Posterior cingulate gyrus (tissue), 11 donors: ENCODE measurements at regions of chr2 and their contacts with region 1.

Region 1: DNA sequence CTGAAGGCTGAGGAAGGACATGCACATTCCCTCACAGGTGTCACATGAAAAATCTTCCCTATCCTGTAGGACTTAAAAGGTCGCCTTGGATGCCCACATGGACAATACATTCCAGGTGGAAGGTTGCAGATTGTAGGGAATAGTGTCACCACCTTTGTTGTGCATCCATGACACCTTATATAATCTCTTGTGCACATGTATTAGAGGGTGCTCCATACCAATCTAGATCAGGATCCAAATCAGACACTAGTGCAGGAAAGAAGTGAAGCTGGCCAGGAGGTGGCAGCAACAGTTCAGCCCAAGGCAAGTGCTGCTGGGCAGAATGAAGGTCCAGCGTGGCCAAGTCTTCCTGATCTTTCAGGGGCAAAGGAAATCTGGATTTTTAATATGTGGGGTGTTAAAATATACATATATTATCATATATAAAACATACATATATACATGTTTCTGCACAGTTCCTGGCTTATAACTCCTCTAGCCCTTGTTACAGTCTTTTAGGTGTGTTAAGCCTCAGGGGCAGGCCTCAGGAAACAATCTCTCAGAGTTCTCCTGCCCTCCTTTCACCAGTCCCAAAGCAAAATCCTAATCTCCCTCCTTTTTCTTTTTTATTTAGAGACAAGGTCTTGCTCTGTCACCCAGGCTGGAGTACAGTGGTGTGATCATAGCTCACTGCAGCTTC is 16.6 kb downstream of the NIF3L1 start:
- DNase-seq: peak; percentile 50 to 95 (median 79)

Region 2: DNA sequence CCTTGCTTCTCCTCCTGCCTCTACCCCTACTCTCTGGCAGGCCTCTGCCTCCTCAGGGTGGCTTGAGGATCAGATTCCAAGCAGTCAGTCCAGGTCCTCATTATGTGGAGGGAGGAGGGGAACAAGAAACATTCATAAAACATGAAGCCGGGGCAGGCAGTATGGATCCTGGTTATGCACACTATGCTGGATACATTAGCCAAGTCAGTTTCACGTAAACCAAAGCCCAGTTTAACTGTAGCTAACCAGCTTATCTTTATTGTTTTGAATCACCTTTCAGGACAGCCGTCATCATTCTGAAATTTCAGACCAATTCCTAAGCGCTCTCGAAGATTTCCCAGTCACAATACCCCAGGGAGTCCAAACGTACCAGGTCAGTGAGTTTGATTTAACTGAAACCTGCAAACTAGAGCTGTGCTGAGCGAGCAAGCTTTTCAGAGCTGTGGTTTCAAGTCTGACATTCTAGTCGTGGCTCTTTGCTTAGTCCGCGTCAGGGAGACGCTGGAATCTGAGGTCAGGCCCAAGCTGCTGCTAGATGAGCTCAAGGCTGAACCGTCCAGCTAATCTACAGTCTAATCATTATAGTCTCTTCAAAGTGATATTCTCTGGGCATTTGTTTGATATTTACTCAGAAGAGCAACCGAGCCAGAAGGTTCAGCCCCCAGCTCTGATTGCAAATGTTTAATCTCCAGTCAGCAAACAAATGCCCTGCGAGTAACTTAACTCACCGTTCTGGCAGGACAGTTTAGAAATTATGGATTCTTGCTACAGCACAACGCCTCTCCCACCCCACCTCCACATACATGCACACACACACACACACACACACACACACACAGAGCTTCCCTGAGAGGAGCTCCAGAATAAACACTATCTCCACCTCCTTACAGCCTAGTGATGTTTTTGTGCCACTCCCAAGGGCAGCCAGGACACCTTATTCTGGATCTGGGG is 157.8 kb before region 1 on chr2:
- intact Hi-C with region 1: no loop called
- DNase-seq: no peak

Region 3: DNA sequence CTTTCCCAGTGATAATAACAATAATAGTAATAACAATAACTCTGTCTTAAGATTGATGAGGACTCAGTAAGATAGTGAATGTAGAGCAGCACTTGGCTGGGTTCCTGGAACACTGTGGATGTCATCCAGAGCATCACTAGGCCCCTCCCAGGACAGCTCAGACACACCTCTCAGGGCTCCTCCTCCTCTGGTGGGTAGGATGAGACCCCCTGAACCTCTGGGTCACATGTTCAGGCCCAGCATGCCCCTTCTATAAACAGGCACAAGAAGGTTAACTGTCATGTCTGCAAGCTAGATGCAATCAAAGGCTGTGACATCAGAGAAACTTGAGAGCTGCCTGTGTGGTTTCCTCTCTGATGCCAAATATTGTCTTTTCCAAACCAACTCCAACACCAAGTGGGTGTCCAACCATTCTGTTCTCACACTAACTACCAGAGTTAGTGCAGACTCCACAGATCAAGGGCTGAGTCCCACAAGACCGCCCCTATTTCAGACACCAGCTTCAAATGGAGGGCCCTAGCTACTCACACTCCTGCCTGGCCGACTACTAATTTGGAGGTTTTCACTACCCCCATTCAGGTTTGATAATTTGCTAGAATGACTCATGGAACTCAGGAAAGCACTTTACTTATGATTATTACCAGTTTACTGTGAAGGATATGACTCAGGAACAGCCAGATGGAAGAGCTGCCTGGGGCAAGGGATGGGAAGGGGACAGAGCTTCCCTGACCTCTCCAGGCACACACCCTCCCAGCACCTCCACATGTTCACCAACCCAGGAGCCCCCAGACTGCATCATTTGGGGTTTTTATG is 140.4 kb before region 1 on chr2:
- intact Hi-C with region 1: no loop called
- DNase-seq: no peak

Region 4: GRCh38 chr2:200811336-200812121 is 94.2 kb before region 1 on chr2 and contains the start of gene BZW1:
- intact Hi-C with region 1: no loop called
- DNase-seq: peak; percentile 94 to 99 (median 96)

Region 5: DNA sequence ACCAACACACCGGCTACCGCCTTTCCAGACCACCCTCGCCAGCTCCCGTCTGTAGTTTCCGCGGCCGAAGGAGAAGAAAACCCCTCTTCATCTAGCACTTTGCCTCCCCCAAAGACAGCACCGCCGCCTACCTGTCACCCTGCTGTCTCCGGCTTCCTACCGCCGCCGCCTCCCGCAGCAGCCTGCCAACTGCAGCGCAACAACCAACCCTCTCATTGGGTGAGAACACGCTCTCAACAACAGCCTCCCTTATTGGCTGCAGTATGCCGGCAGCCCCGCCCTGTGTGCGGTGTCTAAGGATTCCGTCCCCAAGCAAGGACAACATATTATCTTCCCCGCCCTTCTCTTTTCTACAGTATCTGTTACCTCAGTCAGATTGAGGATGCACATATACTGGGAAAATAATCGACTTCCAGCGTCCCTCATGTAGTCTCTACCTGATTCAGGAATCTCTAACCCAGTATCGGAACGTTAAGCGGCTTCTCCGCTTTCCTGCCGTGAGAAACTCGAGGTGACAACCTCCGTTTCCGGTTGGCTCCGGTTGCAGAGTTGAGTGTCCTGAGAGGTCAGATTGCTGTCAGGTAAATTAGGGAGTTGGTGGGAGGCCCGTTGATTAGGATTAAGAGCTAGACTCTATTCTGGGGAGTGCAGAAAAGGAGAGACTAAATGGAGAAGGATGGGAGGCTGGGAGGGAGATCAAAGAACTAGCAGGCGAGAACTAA is 165.9 kb after region 1 on chr2 and contains the starts of genes HYCC2 and NDUFB3:
- intact Hi-C with region 1: loop called (anchors 2 kb)
- DNase-seq: peak; percentile 83 to 98 (median 90)

Region 6: DNA sequence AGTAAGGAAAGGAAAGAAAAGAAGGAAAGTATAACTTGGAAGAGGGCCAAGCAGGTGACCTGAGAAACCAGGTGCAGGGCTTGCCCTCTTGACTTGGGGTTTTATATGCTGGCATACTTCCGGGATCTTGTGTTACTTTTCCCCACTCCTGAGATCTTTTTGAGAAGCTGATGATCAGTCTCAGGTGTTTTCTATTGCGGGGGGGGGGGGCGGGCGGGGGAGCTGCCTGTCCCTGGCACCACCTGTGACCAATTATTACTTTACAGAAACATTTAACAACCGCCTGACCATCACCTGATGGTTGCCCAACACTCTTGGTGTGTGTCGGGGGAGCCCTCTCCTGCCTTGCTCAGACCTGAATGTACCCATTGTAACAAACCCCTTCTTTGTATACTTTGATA is 270.3 kb after region 1 on chr2:
- intact Hi-C with region 1: loop called (anchors 2 kb)
- DNase-seq: no peak

Region 7: DNA sequence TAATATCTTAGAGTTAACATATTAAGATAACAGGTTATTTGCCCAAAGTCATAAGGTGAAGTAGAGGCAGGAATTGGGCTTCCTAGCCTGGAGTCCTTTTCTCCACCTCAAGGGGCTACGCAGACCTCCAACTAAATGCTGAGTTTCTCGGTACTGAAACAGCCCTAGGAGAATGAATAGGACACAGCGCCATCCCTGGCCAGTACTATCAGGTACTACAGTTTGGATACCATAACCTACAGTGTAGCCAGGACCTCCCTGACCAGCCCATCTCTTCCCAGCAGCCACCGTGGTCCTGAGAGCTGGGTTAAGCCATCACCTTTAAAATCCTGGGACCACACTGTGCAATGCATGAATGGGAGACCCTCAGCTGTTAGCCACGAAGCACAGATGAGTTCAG is 370.2 kb after region 1 on chr2:
- intact Hi-C with region 1: no loop called
- DNase-seq: no peak